Activated naive CD4-positive, alpha-beta T cell treated with anti-CD3 and anti-CD28 coated beads, Interleukin-2, amount 10 ng/mL, durations not matched to agents 7 days and 5 days (primary cell): ENCODE measurements at regions of chr18 and their contacts with region 1.

Region 1: DNA sequence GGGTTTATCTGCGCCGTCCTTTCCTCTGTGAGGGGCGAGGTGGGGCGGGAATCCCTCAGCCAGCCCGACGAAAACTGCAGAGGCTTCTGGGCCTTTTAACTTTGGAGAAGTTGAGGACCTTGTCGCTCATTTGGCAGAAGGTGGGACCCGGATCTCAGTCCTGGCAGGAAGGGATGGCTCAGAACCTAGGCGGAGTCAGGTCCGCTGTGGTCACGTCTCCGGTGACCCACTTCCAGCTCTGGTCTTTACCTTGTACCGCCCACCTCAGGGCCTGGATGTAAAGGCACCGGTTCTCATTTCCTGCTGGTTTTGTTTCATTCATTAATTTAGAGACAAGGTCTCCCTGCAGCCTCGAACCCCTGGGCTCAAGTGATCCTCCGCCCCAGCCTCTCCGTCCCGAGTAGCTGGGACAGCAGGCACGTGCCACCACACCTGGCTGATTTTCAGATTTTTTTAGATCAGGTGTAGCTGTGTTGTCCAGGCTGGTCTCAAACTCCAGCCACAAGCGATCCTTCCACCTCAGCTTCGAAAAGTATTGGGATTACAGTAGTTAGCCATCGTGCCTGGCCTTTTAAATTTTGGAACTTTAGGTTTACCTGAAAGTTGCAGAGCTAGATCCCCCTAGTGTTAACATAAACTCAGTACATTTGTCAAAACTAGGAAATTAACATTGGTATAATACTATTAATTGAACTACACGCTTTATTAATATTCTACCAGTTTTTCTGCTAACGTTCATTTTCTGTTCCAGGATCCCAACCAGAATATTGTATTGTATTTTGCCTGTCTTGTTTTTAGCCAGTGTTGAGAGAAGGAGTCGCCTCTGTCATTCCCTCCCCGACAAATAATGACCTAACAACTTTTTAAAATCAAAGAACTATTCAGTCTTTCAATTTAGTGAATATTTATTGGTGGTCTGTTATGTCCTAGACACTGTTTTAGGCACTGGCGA is 852 bp downstream of the POLI start:
- DNase-seq: peak; percentile 71
- H3K4me3 Mint-ChIP-seq: peak overlapping the region; percentile 88
- H3K27ac Mint-ChIP-seq: peak overlapping the region; percentile 96
- H3K4me1 Mint-ChIP-seq: peaks cover 34% of the 10 kb centered on the region
- H3K27me3 Mint-ChIP-seq: peaks cover 8% of the 10 kb centered on the region

Region 2: DNA sequence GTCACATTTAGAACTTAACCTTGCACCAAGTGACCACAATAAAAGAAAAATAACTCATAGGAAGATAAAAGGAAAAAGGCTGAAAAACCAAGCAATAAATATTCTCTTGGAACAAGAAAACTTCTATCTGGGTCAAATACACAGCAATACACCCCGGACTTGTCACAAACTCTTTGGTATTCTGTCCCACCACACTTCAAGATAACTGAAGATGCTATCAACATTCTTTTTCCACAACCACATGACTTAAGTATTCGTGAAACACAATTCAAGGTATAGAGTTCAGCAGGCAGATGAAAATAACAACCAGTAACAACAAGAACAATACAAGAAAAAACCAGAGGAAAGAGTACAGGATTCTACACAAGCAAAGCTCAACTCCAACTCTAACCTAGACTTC is 63.7 kb before region 1 on chr18:
- CTCF ChIA-PET with region 1: interaction called, 10 read pairs
- DNase-seq: no peak
- H3K4me3 Mint-ChIP-seq: no peak overlapping the region
- H3K27ac Mint-ChIP-seq: no peak overlapping the region
- H3K4me1 Mint-ChIP-seq: peaks cover 34% of the 10 kb centered on the region
- H3K27me3 Mint-ChIP-seq: no peaks in the 10 kb centered on the region

Region 3: DNA sequence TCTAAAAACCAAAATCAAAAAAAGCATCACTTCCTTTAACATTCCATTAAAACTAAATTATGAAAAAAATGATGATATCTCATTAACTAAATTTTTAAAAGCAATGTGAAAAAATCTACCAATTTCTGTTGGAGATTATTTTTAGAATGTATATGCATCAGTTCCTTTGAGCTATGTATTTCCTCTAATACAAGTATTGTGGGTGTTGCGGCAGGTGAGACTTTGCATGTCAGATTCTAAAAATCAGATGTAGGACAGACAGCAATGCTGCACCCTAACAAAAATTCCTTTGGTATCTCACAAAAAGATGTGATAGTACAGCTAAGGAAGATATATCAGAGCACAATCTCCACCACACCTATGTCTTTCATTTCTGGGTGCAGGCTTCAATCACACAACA is 52.5 kb before region 1 on chr18:
- CTCF ChIA-PET with region 1: interaction called, 59 read pairs
- DNase-seq: no peak
- H3K4me3 Mint-ChIP-seq: no peak overlapping the region
- H3K27ac Mint-ChIP-seq: no peak overlapping the region
- H3K4me1 Mint-ChIP-seq: peaks cover 55% of the 10 kb centered on the region
- H3K27me3 Mint-ChIP-seq: no peaks in the 10 kb centered on the region

Region 4: DNA sequence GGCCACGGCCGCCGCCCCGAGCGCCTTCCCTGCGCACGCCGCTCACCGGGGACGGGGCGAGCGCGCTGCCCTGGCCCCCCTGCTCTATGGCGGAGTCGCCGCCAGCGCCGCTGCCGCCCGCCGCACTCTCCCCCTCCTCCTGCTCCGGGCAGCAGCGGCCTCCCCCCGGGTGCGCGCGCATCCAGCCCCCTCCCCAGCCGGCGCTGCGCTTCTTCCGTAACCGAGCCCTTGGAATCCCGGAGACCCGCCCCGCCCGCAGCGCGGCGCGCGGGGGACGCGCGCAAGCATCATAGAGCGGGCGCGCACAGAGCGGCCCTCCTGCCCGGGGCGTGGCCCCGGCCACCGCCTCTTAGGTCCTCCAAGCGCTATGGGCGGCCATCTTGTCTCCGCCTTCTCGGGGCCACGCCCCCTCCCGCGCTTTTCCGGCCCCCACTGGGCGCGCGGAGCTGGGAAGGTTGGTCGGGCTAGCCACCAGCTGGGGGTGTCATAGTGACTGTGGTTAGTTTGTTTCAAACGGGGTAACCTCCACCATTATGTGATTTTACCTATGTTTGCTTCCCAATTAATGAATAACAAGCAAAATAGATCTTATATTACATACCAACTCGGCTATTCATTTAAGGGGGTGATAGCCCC is 45.7 kb before region 1 on chr18 and contains the start of gene MBD2:
- CTCF ChIA-PET with region 1: interaction called, 59 read pairs
- DNase-seq: peak; percentile 94
- H3K4me3 Mint-ChIP-seq: peak within 1 kb of the TSS; percentile 91
- H3K27ac Mint-ChIP-seq: peak within 1 kb of the TSS; percentile 95
- H3K4me1 Mint-ChIP-seq: peaks cover 45% of the 10 kb centered on the region
- H3K27me3 Mint-ChIP-seq: no peaks in the 10 kb centered on the region

Region 5: DNA sequence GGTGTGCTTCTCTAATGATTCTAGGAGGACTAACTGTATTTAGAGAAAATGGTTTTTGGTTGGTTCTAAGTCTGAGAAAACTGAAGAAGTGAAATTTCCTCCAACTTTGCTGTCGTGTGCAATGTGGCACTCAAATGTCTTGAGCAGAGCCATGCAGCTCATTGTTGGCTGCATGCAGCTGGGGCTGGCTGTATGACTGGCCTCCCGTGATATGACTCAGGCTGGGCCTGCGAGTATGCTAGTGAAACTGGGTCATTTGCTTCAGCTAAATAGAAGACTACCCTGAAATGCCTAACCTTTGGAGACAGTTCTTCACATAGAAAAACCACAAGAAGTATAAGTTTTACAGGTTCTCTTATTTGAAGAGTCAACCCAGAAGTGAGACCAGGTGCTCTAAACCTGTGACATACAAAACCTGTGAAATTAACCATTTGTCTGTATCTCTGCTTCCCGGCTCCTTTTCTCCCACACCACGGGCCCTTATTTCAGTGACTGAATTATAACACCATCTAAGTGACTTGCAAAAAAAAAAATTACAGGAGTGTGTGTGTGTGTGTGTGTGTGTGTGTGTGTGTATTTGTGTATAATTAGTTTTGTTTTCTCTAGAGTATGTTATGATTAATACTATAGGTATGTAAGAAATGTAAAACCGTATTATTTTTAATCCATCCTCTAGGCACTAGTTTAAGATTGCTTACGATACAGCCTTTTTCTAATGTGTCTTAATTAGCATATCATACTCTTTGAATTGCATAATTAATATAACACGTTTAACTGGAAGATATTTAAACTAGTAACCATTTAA is 15.0 kb after region 1 on chr18:
- CTCF ChIA-PET with region 1: interaction called, 10 read pairs
- DNase-seq: peak; percentile 46
- H3K4me3 Mint-ChIP-seq: no peak overlapping the region
- H3K27ac Mint-ChIP-seq: peak overlapping the region; percentile 16
- H3K4me1 Mint-ChIP-seq: peaks cover 23% of the 10 kb centered on the region
- H3K27me3 Mint-ChIP-seq: no peaks in the 10 kb centered on the region

Region 6: DNA sequence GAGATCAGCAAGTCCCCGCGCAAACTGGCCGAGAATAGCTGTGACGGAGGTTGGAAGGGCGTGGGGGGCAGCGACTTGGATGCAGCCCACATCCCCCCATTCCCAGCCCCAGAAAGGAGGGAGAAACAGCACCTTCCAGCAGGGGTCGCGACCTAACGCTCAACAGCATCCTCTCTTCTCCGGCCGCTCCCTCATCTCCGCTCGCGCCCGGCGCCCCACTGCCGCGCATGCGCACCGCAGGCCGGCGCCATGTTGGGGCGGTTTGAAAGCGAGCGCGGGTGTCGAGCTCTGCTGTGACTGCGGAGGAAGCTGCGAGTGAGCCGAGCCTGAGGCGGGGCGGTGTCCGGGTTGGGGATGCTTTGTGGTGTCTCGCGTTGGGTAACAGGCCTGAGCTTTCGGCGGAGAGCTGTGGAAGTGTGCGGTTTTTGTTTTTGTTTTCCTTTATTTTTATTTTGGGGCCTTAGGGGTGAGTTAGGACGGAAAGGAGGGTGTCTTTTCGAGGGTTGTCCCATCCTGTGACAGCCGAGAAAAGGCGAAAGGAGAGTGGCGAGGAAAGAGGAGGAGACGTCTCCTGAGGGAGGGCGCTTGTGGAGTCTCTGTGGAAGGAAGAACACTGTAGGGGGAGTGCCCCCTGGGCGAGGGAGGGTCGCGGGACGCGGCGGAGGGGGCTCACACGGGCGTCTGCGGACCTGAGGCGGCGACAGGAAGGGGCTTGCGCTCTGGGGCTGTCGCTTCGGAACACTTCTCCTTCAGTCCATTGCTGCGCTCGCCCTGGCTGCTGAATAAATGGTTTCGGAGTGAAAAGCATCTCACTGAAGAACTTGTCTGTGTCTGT is 87.7 kb after region 1 on chr18 and contains the starts of genes C18orf54 and STARD6:
- CTCF ChIA-PET with region 1: interaction called, 24 read pairs
- DNase-seq: peak; percentile 93
- H3K4me3 Mint-ChIP-seq: peak within 1 kb of the TSS; percentile 99
- H3K27ac Mint-ChIP-seq: peak within 1 kb of the TSS; percentile 97
- H3K4me1 Mint-ChIP-seq: peaks cover 31% of the 10 kb centered on the region
- H3K27me3 Mint-ChIP-seq: peaks cover 9% of the 10 kb centered on the region

Region 7: GRCh38 chr18:54465502-54465901 is 195.3 kb after region 1 on chr18:
- CTCF ChIA-PET with region 1: no interaction called
- DNase-seq: no peak
- H3K4me3 Mint-ChIP-seq: no peak overlapping the region
- H3K27ac Mint-ChIP-seq: no peak overlapping the region
- H3K4me1 Mint-ChIP-seq: no peaks in the 10 kb centered on the region
- H3K27me3 Mint-ChIP-seq: no peaks in the 10 kb centered on the region